ENCODE measurements at regions of chr10 and their contacts with region 1.

Region 1: GRCh38 chr10:30359373-30360206 is 10.5 kb upstream of the MTPAP start:
- DNase-seq: peak; percentile 68
- H3K4me3 ChIP-seq: no peak overlapping the region
- H3K27ac ChIP-seq: no peak overlapping the region
- H3K4me1 ChIP-seq: peaks cover 3% of the 10 kb centered on the region
- H3K27me3 ChIP-seq: no peaks in the 10 kb centered on the region
- CTCF ChIP-seq: peak; percentile 80 to 82

Region 2: GRCh38 chr10:30309401-30309800 is 50.2 kb before region 1 on chr10:
- CTCF ChIA-PET with region 1: no interaction called
- dilution Hi-C with region 1: loop called (anchors 10 kb)
- in situ Hi-C with region 1: no loop called
- intact Hi-C with region 1: no loop called
- DNase-seq: no peak
- H3K4me3 ChIP-seq: no peak overlapping the region
- H3K27ac ChIP-seq: no peak overlapping the region
- H3K4me1 ChIP-seq: no peaks in the 10 kb centered on the region
- H3K27me3 ChIP-seq: no peaks in the 10 kb centered on the region
- CTCF ChIP-seq: no peak

Region 3: DNA sequence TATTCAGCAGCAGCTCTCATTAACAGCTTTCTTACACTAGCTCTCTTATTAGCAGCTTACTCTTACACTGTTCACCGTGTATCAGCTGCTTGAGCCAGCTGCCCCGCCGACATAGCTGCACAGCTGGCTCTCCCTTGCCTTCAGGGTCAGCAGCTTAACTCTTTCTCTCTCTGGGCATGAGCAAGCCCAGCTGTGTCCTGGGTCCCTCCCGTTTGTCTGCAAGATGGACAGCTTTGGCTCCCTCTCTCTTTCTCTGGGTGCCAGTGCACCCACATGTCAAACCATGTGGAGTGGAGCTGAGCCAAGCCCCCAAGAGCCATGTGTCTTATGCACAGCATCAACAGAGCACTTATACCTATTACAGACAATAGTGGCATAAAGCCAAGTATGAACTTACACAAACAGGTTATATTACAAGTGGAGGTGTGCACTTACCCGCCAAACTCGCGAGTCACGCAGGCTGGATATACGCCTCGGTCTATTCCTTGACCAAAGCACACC is 25.2 kb after region 1 on chr10:
- CTCF ChIA-PET with region 1: interaction called, 34 read pairs
- dilution Hi-C with region 1: no loop called
- in situ Hi-C with region 1: no loop called
- intact Hi-C with region 1: loop called (anchors 1 kb)
- DNase-seq: peak; percentile 50
- H3K4me3 ChIP-seq: no peak overlapping the region
- H3K27ac ChIP-seq: no peak overlapping the region
- H3K4me1 ChIP-seq: peaks cover 20% of the 10 kb centered on the region
- H3K27me3 ChIP-seq: peaks cover 4% of the 10 kb centered on the region
- CTCF ChIP-seq: peak; percentile 64 to 70

Region 4: GRCh38 chr10:30413996-30414576 is 54.5 kb after region 1 on chr10:
- CTCF ChIA-PET with region 1: interaction called, 12 read pairs
- dilution Hi-C with region 1: no loop called
- in situ Hi-C with region 1: no loop called
- intact Hi-C with region 1: no loop called
- DNase-seq: peak; percentile 48
- H3K4me3 ChIP-seq: no peak overlapping the region
- H3K27ac ChIP-seq: no peak overlapping the region
- H3K4me1 ChIP-seq: no peaks in the 10 kb centered on the region
- H3K27me3 ChIP-seq: no peaks in the 10 kb centered on the region
- CTCF ChIP-seq: peak; percentile 86 to 89

Region 5: GRCh38 chr10:30456266-30456665 is 96.7 kb after region 1 on chr10:
- CTCF ChIA-PET with region 1: no interaction called
- dilution Hi-C with region 1: no loop called
- in situ Hi-C with region 1: no loop called
- intact Hi-C with region 1: no loop called
- DNase-seq: no peak
- H3K4me3 ChIP-seq: no peak overlapping the region
- H3K27ac ChIP-seq: no peak overlapping the region
- H3K4me1 ChIP-seq: peaks cover 10% of the 10 kb centered on the region
- H3K27me3 ChIP-seq: no peaks in the 10 kb centered on the region
- CTCF ChIP-seq: no peak

Region 6: GRCh38 chr10:30591249-30591670 is 231.7 kb after region 1 on chr10:
- CTCF ChIA-PET with region 1: interaction called, 5 read pairs
- dilution Hi-C with region 1: no loop called
- in situ Hi-C with region 1: no loop called
- intact Hi-C with region 1: loop called (anchors 1 kb)
- DNase-seq: peak; percentile 42
- H3K4me3 ChIP-seq: no peak overlapping the region
- H3K27ac ChIP-seq: no peak overlapping the region
- H3K4me1 ChIP-seq: no peaks in the 10 kb centered on the region
- H3K27me3 ChIP-seq: peaks cover 5% of the 10 kb centered on the region
- CTCF ChIP-seq: peak; percentile 63 to 70

Measured in mammary epithelial cell (primary cell).